PC-9 (cell line): ENCODE measurements at regions of chr6 and their contacts with region 1.

Region 1: DNA sequence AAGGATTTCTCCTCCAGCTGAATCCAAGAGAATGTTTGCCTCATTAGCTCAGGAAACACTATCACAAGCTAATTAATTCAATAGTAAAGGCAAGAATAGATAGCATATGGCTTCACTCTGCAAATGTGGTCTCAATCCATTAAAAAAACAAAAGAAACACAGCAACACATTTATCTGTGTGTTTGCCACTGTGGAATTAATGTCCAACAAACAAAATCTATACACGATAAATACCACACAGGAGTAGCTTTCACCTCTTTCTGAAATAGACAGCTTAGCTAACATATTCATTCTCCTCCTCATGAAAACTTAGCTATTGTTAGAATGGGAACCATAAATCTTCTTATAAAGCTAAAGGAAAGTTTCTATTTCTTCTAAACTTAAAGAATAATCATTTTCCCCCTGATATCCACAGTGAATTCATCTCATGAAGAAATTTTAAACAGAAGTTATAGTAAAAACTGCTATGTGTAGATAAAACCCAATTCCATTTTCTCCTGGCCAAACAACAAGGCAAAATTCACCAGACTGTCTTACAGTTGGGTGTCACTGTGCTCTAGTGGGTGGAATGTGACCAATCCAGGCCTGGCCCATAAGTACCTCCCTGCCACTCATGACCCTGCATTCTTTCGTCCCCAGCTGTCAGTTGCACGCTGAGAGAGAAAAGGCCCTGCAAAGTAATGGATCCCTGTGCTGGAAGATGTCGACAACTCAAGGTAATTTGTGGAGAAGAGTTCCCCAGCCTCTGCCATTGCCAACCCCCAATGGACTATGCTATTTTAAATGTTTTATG is 92.9 kb upstream of the NRSN1 start:
- DNase-seq: no peak
- H3K4me3 ChIP-seq: no peak overlapping the region
- H3K27ac ChIP-seq: no peak overlapping the region
- H3K4me1 ChIP-seq: no peaks in the 10 kb centered on the region
- H3K27me3 ChIP-seq: no peaks in the 10 kb centered on the region
- CTCF ChIP-seq: no peak

Region 2: GRCh38 chr6:23498013-23498412 is 535.1 kb before region 1 on chr6:
- CTCF ChIA-PET with region 1: no interaction called
- POLR2A ChIA-PET with region 1: interaction called, 14 read pairs
- intact Hi-C with region 1: no loop called
- DNase-seq: no peak
- H3K4me3 ChIP-seq: no peak overlapping the region
- H3K27ac ChIP-seq: no peak overlapping the region
- H3K4me1 ChIP-seq: no peaks in the 10 kb centered on the region
- H3K27me3 ChIP-seq: no peaks in the 10 kb centered on the region
- CTCF ChIP-seq: no peak

Region 3: DNA sequence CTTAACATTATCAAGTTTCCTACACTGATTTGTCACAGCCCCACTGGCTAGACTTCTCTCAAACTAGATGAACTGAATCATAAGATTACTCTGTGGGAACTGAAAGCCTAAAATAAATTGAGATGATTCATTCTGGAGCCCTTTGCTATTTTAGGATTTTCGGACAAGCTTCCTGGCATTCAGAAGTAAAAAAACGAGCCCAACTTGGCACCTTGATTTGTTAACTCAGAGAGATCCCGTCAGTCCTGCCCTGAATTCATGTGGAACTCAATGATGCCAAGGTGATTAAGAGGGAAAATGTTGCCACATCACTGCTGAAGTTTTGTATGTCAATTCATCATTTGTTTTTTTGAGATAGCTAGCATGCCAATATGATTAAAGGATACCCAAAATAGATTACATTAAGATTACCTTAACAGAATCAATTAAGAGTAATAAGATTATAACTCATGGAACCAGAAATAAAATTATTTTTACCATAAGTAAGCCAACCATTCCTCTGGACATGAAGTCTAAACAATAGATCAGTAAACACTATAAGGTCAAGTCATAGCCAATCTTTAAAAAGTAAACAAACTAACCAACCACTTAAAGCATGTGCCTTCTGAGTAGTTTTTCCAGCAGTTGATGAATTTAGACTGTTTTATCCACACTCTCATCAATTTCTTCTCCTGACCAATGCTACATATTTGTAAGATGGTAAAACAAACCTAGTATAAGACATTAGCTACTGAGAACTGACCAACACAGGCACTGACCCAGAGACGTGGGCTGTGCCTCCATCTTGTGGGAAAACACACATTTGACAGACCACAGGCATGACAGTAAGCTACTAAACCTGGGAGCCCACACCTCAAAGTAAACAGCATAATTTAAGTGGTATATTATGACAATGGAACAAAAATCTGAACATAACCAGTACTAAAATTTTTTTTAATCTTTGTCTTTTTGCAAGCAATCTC is 28.7 kb before region 1 on chr6:
- CTCF ChIA-PET with region 1: no interaction called
- POLR2A ChIA-PET with region 1: no interaction called
- intact Hi-C with region 1: no loop called
- DNase-seq: no peak
- H3K4me3 ChIP-seq: no peak overlapping the region
- H3K27ac ChIP-seq: no peak overlapping the region
- H3K4me1 ChIP-seq: no peaks in the 10 kb centered on the region
- H3K27me3 ChIP-seq: no peaks in the 10 kb centered on the region
- CTCF ChIP-seq: no peak